ENCODE measurements at regions of chr7 and their contacts with region 1.

Region 1: DNA sequence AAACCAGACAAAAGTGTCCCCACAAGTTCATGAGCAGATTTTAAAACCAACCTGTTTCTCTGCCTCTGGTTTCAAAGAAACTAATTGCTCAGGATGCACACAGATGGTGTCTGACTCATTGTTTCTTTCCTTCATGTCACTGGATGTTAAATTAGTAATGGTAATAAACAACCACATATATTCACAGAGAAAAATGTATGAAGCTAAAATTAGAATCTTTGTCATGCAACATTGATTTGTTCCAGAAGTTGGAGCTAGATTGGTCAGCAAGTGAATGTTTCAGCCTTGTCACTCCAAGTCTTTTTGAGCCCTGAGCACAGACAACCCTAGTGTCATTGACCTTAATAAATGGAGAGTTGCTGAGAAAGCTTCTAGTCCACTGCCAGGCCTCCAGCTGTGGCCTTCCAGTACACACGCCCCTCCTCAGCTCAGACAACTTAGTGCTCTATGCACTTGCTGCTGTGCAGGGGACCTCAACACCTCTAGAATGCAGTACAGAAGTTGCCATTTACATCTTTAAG is 175.9 kb downstream of the CCDC71L start:
- DNase-seq: peak; percentile 64
- H3K4me3 ChIP-seq: no peak overlapping the region
- CTCF ChIP-seq: no peak

Region 2: DNA sequence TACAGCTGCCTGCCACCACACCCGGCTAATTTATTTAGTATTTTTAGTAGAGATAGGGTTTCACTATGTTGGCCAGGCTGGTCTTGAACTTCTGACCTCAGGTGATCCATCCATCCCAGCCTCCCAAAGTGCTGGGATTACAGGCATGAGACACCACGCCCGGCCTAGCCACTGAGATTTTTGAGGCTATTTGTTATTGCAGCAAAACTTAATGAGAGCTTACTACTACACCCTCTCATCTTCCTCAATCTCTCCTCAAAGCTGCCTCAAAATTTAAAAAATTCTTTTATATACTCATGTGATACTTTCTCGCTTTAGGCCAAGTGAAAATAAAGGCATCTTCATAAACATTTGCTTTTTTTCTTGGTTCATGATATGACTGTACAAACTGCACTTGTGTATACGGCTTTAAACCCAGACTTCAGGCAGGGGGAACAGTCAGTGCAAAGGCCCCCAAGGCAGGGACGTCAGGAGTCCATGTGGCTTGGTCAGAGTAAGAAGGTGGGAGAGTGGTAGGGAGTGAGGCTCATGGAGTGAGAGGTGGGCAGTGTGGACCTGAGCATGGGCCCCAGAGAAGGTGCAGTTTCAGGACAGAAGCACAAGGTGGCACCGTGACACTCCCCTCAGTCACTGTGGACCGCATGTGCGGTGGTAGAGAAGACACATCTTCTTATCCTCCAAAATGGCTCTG is 428.4 kb before region 1 on chr7:
- in situ Hi-C with region 1: loop called (anchors 25 kb)
- DNase-seq: peak; percentile 60
- H3K4me3 ChIP-seq: no peak overlapping the region
- CTCF ChIP-seq: peak; percentile 89

Region 3: GRCh38 chr7:106206826-106207541 is 278.1 kb before region 1 on chr7:
- in situ Hi-C with region 1: no loop called
- DNase-seq: no peak
- H3K4me3 ChIP-seq: no peak overlapping the region
- CTCF ChIP-seq: no peak

Region 4: GRCh38 chr7:106582373-106582772 is 97.3 kb after region 1 on chr7:
- in situ Hi-C with region 1: no loop called
- DNase-seq: no peak
- H3K4me3 ChIP-seq: no peak overlapping the region
- CTCF ChIP-seq: no peak

Region 5: GRCh38 chr7:106659963-106660861 is 175.1 kb after region 1 on chr7:
- in situ Hi-C with region 1: loop called (anchors 10 kb)
- DNase-seq: peak; percentile 27
- H3K4me3 ChIP-seq: peak overlapping the region; percentile 82
- CTCF ChIP-seq: peak; percentile 75

Measured in astrocyte of the cerebellum (primary cell).